ENCODE measurements at regions of chr10 and their contacts with region 1.

Region 1: GRCh38 chr10:3785257-3785850 is 345 bp upstream of the KLF6 start:
- DNase-seq: no peak
- H3K4me3 ChIP-seq: peak overlapping the region; percentile 94
- CTCF ChIP-seq: no peak

Region 2: GRCh38 chr10:3805791-3806461 is 20.6 kb after region 1 on chr10:
- CTCF ChIA-PET with region 1: no interaction called
- POLR2A ChIA-PET with region 1: interaction called, 22 read pairs
- DNase-seq: no peak
- H3K4me3 ChIP-seq: peak overlapping the region; percentile 34
- CTCF ChIP-seq: no peak

Region 3: DNA sequence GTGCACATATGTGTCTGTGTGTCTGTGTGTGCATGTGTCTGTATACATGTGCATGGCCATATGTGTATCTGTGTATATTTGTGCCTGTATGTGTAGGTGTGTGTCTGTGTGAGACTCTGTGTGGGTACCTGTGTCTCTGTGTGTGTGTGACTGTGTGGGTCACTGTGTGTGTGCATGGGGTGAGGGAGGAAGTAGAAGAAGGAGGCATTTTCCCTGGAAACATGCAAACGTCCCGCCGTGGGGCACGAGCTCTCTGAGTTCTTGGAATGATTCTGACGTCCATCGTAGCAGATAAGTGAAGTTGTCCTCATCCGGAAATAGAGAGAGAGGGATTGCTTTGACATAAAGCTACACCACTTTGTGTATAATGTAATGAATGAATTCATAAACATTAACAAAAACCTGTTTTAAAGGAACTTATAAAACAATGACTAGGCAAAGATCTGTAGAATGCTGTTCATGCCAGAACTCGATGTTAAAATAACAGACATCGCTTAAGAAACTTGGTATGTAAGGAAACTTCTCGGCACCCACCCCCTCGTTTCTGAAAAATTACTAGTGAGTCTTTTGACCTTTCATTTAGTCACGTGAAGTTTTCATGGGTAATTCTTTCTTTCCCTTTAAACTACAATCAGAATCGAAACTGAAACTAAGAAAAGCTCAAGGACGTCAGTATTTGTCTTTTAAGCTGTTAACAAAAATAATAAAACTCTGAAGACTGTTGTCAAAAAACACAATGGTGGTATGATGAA is 43.2 kb after region 1 on chr10:
- CTCF ChIA-PET with region 1: no interaction called
- POLR2A ChIA-PET with region 1: interaction called, 17 read pairs
- DNase-seq: no peak
- H3K4me3 ChIP-seq: peak overlapping the region; percentile 31
- CTCF ChIP-seq: no peak

Region 4: DNA sequence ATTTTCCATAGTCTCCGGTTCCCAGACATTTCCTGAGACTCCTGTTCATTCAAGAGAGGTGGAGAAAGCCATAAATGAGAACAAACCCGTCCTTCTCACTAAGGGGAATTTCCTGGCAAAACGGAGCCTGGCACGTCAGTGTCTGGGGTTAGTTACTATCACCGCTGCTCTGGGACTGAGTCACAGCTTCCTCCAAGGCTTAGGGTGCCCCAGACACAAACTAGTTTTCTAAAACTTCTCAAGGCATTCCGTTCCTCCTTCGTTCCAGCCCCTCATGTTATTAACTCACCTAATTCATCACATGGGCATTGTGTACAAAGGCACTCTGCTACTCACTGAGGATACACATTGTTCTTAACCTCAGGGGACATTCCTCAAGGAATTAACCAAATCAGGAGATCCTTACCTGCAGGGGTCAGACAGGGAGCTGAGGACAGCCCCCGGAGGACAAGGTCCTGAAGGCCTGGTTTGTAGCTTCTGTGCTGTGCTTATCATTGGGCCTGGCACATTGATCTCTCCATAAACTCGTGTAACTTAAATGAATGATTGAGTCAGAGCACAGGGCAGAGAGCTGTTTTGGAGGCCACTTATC is 102.6 kb after region 1 on chr10:
- CTCF ChIA-PET with region 1: no interaction called
- POLR2A ChIA-PET with region 1: interaction called, 46 read pairs
- DNase-seq: peak; percentile 89
- H3K4me3 ChIP-seq: no peak overlapping the region
- CTCF ChIP-seq: no peak

Region 5: GRCh38 chr10:4101918-4102654 is 316.7 kb after region 1 on chr10:
- CTCF ChIA-PET with region 1: no interaction called
- POLR2A ChIA-PET with region 1: no interaction called
- DNase-seq: no peak
- H3K4me3 ChIP-seq: no peak overlapping the region
- CTCF ChIP-seq: no peak

Region 6: DNA sequence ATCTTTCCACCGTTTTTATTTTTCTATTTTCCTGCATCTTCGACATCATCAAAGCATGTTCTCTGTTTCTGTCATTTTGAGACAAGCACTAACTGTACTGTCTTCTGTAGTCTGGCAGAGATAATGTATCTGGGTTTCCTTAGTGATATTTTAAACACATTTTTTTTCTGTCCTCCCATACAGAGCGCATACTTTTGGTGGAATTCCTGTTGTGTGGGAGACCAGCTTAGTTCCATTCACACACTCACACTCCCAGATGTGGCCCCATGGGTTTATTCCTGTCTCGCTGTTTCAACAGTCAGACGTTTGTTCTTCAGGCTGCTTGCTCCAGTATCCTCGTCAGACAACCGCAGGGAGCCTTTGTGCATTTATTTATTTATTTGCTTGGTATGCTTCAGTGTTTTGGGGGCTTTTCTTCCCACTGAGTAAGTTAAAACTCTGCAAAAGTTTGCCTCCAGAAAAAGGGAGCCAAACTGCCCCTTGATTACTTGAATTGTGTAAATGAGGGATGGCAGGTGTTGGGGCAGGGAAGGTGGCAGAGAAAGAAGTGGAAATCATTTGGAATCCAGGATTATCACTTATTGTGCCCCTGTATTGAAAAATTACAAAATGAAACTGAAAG is 456.5 kb after region 1 on chr10:
- CTCF ChIA-PET with region 1: interaction called, 3 read pairs
- POLR2A ChIA-PET with region 1: interaction called, 18 read pairs
- DNase-seq: peak; percentile 100
- H3K4me3 ChIP-seq: peak overlapping the region; percentile 42
- CTCF ChIP-seq: no peak

Region 7: GRCh38 chr10:4344511-4344994 is 559.2 kb after region 1 on chr10:
- CTCF ChIA-PET with region 1: no interaction called
- POLR2A ChIA-PET with region 1: interaction called, 19 read pairs
- DNase-seq: peak; percentile 100
- H3K4me3 ChIP-seq: no peak overlapping the region
- CTCF ChIP-seq: no peak

Measured in AG04449 (cell line).